MCF 10A (cell line): ENCODE measurements at regions of chr5 and their contacts with region 1.

Region 1: GRCh38 chr5:54517174-54518092 is at the start of gene SNX18:
- DNase-seq: peak; percentile 86
- H3K4me3 Mint-ChIP-seq: peak within 1 kb of the TSS; percentile 57
- H3K27ac Mint-ChIP-seq: no peak within 1 kb of the TSS
- H3K4me1 Mint-ChIP-seq: peaks cover 18% of the 10 kb centered on the region
- H3K27me3 Mint-ChIP-seq: no peaks in the 10 kb centered on the region
- CTCF ChIP-seq: peak; percentile 98
- total RNA-seq, gene SNX18: 8.7 and 10.0 TPM in 2 replicates

Region 2: GRCh38 chr5:54646356-54647101 is 129.1 kb after region 1 on chr5:
- CTCF ChIA-PET with region 1: interaction called, 3 read pairs
- POLR2A ChIA-PET with region 1: no interaction called
- intact Hi-C with region 1: loop called (anchors 10 kb)
- DNase-seq: peak; percentile 91
- H3K4me3 Mint-ChIP-seq: no peak overlapping the region
- H3K27ac Mint-ChIP-seq: peak overlapping the region; percentile 44
- H3K4me1 Mint-ChIP-seq: peaks cover 52% of the 10 kb centered on the region
- H3K27me3 Mint-ChIP-seq: no peaks in the 10 kb centered on the region
- CTCF ChIP-seq: no peak

Region 3: DNA sequence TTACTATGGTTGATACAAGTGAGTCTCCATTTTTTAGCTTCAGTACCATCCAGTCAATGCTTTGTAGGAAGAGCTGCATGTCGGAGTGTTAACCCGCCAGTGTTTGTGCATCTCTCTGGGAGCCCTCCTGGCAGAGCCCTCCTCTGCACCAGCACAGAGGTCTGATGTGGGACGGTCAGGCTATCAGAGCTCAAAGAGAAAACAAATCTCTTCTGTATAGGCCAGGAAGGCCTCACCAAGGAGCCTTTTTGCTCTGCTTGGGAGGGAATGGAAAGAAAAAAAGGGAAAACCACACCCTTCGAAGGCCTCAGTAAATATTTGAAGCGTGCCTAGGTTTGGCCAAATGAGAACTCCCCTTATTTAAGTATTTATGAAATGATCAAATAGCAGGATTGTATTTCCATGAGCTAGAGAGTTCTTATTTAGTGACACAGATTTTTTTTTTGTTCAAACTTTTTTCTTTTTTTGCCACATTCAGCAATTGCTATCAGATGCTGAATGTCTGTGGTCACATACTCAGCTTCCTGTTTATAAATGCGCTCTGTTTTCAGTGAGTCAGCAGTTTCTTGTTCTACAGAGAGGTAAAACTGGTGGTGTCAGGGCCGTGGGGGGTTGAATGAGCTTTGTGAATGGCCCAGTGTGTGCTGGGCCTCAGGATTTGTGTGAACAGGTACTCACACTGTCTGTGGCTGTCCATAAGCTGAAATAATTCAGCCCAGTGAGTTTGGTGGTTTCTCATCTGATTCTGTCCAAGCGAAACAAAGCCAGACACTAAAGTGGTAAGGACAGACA is 226.8 kb after region 1 on chr5:
- CTCF ChIA-PET with region 1: interaction called, 31 read pairs
- POLR2A ChIA-PET with region 1: interaction called, 7 read pairs
- intact Hi-C with region 1: loop called (anchors 1 kb)
- DNase-seq: peak; percentile 78
- H3K4me3 Mint-ChIP-seq: no peak overlapping the region
- H3K27ac Mint-ChIP-seq: peak overlapping the region; percentile 74
- H3K4me1 Mint-ChIP-seq: peaks cover 6% of the 10 kb centered on the region
- H3K27me3 Mint-ChIP-seq: no peaks in the 10 kb centered on the region
- CTCF ChIP-seq: no peak

Region 4: DNA sequence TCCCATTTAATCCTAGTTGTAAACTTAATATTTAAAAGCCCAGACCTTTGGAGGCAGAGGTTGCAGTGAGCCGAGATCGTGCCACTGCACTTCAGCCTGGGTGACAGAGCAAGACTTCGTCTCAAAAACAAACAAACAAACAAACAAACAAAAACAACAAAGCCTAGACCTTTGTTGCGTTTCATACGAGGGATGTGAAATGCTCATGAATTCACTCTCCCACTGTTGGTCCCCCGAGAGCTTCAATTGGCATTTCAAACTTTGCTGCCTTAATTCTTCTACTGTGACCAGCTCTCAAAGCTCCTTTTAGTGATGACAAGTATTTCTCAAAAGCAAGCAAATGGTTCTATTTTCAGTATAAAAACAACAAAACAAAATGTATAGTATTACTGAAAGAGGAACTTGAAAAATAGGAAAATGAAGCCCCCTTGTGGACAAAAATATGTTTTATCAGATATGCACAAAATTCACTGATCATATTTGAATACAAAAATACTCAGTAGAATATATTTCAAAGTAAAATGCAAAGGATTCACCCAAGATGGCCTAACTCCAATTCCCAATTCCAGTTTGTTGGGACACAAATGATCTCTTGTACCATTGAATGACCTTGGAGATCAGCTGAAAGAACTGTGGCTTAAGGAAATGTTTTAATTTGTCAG is 327.6 kb after region 1 on chr5:
- CTCF ChIA-PET with region 1: interaction called, 101 read pairs
- POLR2A ChIA-PET with region 1: interaction called, 18 read pairs
- intact Hi-C with region 1: loop called (anchors 1 kb)
- DNase-seq: peak; percentile 47
- H3K4me3 Mint-ChIP-seq: no peak overlapping the region
- H3K27ac Mint-ChIP-seq: no peak overlapping the region
- H3K4me1 Mint-ChIP-seq: no peaks in the 10 kb centered on the region
- H3K27me3 Mint-ChIP-seq: no peaks in the 10 kb centered on the region
- CTCF ChIP-seq: peak; percentile 47

Region 5: GRCh38 chr5:54867310-54867944 is 350.0 kb after region 1 on chr5:
- CTCF ChIA-PET with region 1: interaction called, 83 read pairs
- POLR2A ChIA-PET with region 1: interaction called, 8 read pairs
- intact Hi-C with region 1: loop called (anchors 1 kb)
- DNase-seq: peak; percentile 57
- H3K4me3 Mint-ChIP-seq: peak overlapping the region; percentile 44
- H3K27ac Mint-ChIP-seq: no peak overlapping the region
- H3K4me1 Mint-ChIP-seq: peaks cover 6% of the 10 kb centered on the region
- H3K27me3 Mint-ChIP-seq: peaks cover 13% of the 10 kb centered on the region
- CTCF ChIP-seq: peak; percentile 49

Region 6: GRCh38 chr5:54895816-54896341 is 378.4 kb after region 1 on chr5:
- CTCF ChIA-PET with region 1: interaction called, 75 read pairs
- POLR2A ChIA-PET with region 1: interaction called, 4 read pairs
- intact Hi-C with region 1: loop called (anchors 1 kb)
- DNase-seq: peak; percentile 73
- H3K4me3 Mint-ChIP-seq: no peak overlapping the region
- H3K27ac Mint-ChIP-seq: peak overlapping the region; percentile 29
- H3K4me1 Mint-ChIP-seq: peaks cover 5% of the 10 kb centered on the region
- H3K27me3 Mint-ChIP-seq: peaks cover 40% of the 10 kb centered on the region
- CTCF ChIP-seq: peak; percentile 65

Region 7: GRCh38 chr5:55159763-55160492 is 642.5 kb after region 1 on chr5 and contains the start of gene GPX8:
- CTCF ChIA-PET with region 1: interaction called, 6 read pairs
- POLR2A ChIA-PET with region 1: interaction called, 3 read pairs
- intact Hi-C with region 1: loop called (anchors 2 kb)
- DNase-seq: peak; percentile 88
- H3K4me3 Mint-ChIP-seq: peak within 1 kb of the TSS; percentile 78
- H3K27ac Mint-ChIP-seq: peak within 1 kb of the TSS; percentile 82
- H3K4me1 Mint-ChIP-seq: peaks cover 2% of the 10 kb centered on the region
- H3K27me3 Mint-ChIP-seq: peaks cover 13% of the 10 kb centered on the region
- CTCF ChIP-seq: peak; percentile 66
- total RNA-seq, gene GPX8: 37.2 and 38.8 TPM in 2 replicates